ENCODE measurements at regions of chr5 and their contacts with region 1.

Region 1: DNA sequence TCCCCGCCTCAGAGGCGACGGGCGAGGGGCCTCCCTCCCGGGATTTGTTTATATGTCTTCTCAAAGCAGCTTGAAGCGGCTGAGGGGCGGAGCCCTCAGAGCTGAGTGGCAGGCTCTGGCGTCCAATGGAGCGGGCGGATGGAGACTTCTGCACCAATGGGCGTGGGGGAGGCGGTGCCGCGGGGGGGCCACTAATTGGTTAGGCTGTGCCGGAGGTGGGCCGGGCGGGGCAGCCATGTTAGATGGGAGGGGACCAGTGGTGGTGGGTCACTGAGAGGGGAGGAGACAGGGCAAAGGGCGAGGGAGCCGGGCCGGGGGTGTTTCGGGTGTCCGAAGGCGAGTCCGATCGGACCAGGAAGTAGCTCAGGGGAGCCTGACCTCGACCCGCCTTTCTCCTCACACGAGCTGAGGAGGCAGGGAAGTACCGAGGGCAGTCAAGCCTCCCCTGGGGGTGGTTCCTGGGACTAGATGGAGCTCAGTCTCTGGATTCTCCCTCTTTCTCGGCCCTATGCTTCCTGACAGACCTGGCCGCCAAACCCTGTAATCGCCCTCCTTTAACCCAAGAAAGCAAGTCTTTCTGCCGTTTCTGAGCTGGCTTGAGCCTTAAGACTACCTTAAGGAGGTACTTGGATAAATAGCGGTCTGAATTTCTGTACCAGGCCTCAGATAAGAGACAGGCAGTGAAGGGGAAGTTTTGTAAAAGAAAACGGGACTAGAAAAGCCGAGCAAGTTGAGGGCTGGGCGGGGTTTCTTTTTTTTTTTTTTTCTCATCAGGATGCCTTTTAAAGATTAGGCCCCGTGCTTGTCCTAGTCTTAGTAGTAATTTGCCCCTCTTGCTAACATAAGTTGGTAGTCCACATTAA is 1.1 kb downstream of the CREBRF start:
- DNase-seq: peak; percentile 98 to 99 (median 98)
- ATAC-seq: peak; percentile 81
- H3K4me3 ChIP-seq: peak overlapping the region; percentile 92 to 99
- H3K4me3 Mint-ChIP-seq: peak overlapping the region; percentile 94
- H3K27ac ChIP-seq: peak overlapping the region; percentile 80 to 81
- H3K27ac Mint-ChIP-seq: peak overlapping the region; percentile 94
- H3K4me1 ChIP-seq: peaks cover 36% of the 10 kb centered on the region
- H3K4me1 Mint-ChIP-seq: peaks cover 44% of the 10 kb centered on the region
- H3K27me3 ChIP-seq: no peaks in the 10 kb centered on the region
- H3K27me3 Mint-ChIP-seq: no peaks in the 10 kb centered on the region
- CTCF ChIP-seq: no peak

Region 2: DNA sequence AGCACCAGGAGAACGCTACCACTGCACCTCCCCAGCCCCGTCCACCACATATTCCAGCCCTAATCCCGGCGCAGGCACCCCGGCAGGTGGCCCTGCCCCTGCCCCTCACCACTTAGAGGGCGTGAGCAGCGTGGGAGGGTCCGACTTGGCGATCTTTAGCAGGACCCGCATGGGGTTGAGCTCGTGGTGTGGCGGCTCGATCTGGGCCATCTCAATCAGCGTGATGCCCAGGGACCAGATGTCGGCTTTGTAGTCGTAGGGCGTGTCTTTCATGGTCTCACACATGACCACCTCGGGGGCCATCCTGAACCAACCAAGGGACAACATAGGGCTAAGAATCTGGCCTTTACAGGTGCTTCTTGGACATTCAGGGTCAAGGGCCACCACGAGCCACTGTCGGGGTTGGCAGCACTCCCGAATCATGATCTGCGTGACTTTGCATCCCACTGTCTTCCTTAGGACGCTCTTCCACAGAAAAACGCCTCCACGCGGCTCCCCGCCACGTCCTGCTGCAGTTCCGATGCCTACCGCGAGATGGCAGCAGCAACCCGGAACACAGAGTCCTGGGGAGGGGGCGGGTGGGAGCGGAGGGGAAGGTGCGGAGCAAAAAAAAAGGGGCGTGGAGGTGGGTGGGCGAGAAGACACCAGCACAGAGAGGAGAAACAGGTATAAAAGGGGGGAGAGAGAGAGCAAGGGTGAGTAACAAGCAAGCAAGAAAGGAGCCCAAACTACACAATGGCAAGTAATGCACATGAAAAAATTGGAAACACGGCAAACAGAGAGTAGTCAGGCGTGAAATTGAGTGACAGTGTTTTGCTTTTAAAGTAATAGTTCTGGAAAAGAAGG is 950.6 kb before region 1 on chr5:
- CTCF ChIA-PET with region 1: no interaction called
- POLR2A ChIA-PET with region 1: no interaction called
- intact Hi-C with region 1: loop called in 1 of 2 experiments (anchors 10 kb)
- DNase-seq: peak; percentile 31 to 81 (median 69)
- ATAC-seq: peak; percentile 42
- H3K4me3 ChIP-seq: no peak overlapping the region
- H3K4me3 Mint-ChIP-seq: peak overlapping the region; percentile 8
- H3K27ac ChIP-seq: peak overlapping the region in 1 of 2 experiments; percentile 51
- H3K27ac Mint-ChIP-seq: peak overlapping the region; percentile 84
- H3K4me1 ChIP-seq: peaks cover 36% of the 10 kb centered on the region
- H3K4me1 Mint-ChIP-seq: peaks cover 48% of the 10 kb centered on the region
- H3K27me3 ChIP-seq: no peaks in the 10 kb centered on the region
- H3K27me3 Mint-ChIP-seq: no peaks in the 10 kb centered on the region
- CTCF ChIP-seq: peak; percentile 98

Region 3: DNA sequence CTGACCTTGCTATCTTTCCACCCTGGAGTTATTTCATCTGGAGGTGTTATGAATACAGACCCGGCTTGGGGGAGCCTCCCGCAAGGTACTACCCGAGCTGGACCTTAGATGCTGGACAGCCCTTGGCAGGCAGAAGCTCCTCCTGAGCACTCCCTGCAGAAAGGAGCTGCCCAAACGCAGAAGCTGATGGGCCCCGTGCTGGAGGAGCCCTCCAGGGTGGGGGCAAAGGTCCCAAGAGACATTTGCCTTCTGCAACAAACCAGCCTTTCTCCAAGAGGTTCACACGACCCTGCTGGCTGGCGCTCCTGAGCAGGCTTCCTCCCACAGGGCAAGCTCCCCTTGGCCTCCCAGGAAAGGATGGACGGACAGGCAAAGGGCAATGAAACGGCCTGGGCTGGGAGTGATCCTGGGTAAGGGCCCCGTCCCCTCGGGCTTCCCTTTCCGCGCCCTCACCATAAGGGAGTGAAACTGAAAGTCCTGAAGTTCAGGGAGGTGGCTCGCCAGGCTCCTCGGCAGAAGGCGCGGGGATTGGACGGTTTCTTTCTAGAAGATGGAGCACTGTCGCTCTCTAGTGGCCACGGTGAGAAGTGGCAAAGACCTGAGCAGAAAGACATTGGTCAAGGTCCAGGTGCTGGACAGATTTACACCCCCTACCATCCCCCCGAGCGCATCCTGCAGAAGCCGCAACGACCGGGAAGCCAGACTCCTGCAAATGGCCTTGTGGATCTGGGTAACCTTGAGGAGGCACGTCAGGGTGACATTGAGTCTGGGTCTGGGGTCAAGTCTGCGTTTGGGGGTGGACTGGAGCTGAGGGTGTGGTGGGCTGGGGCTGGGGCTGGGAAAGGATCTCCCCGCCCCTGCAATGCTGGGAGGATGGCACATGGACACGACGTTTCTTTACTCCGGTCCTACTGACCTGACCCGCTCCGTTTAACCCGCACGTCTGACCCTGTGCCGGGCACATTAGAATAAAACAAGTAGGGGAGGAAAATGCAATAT is 359.9 kb before region 1 on chr5:
- CTCF ChIA-PET with region 1: no interaction called
- POLR2A ChIA-PET with region 1: no interaction called
- intact Hi-C with region 1: loop called in 1 of 2 experiments (anchors 2 kb)
- DNase-seq: peak; percentile 67 to 92 (median 84)
- ATAC-seq: peak; percentile 98
- H3K4me3 ChIP-seq: peak overlapping the region; percentile 64 to 90
- H3K4me3 Mint-ChIP-seq: peak overlapping the region; percentile 93
- H3K27ac ChIP-seq: peak overlapping the region; percentile 43 to 81
- H3K27ac Mint-ChIP-seq: peak overlapping the region; percentile 92
- H3K4me1 ChIP-seq: peaks cover 10% of the 10 kb centered on the region
- H3K4me1 Mint-ChIP-seq: peaks cover 22% of the 10 kb centered on the region
- H3K27me3 ChIP-seq: peaks cover 0 to 3% of the 10 kb centered on the region in 2 experiments
- H3K27me3 Mint-ChIP-seq: peaks cover 16% of the 10 kb centered on the region
- CTCF ChIP-seq: peak; percentile 81

Region 4: GRCh38 chr5:172833686-172834414 is 223.4 kb before region 1 on chr5 and contains the start of gene ERGIC1:
- CTCF ChIA-PET with region 1: no interaction called
- POLR2A ChIA-PET with region 1: no interaction called
- intact Hi-C with region 1: loop called in 1 of 2 experiments (anchors 5 kb)
- DNase-seq: peak in 8 of 9 experiments; percentile 58 to 84 (median 72)
- ATAC-seq: peak; percentile 74
- H3K4me3 ChIP-seq: peak within 1 kb of the TSS; percentile 67 to 81
- H3K4me3 Mint-ChIP-seq: peak within 1 kb of the TSS; percentile 86
- H3K27ac ChIP-seq: peak within 1 kb of the TSS; percentile 67 to 88
- H3K27ac Mint-ChIP-seq: peak within 1 kb of the TSS; percentile 92
- H3K4me1 ChIP-seq: peaks cover 44% of the 10 kb centered on the region
- H3K4me1 Mint-ChIP-seq: peaks cover 44% of the 10 kb centered on the region
- H3K27me3 ChIP-seq: no peaks in the 10 kb centered on the region
- H3K27me3 Mint-ChIP-seq: no peaks in the 10 kb centered on the region
- CTCF ChIP-seq: no peak
- total RNA-seq, gene ERGIC1: 61.0 to 61.2 TPM

Region 5: GRCh38 chr5:172984243-172984953 is 72.9 kb before region 1 on chr5:
- CTCF ChIA-PET with region 1: interaction called, 7 read pairs
- POLR2A ChIA-PET with region 1: interaction called, 24 read pairs
- intact Hi-C with region 1: loop called (anchors 1 kb)
- DNase-seq: peak; percentile 52 to 90 (median 76)
- ATAC-seq: peak; percentile 84
- H3K4me3 ChIP-seq: peak overlapping the region; percentile 78 to 100
- H3K4me3 Mint-ChIP-seq: peak overlapping the region; percentile 97
- H3K27ac ChIP-seq: peak overlapping the region; percentile 74 to 99
- H3K27ac Mint-ChIP-seq: peak overlapping the region; percentile 98
- H3K4me1 ChIP-seq: peaks cover 18% of the 10 kb centered on the region
- H3K4me1 Mint-ChIP-seq: peaks cover 48% of the 10 kb centered on the region
- H3K27me3 ChIP-seq: no peaks in the 10 kb centered on the region
- H3K27me3 Mint-ChIP-seq: no peaks in the 10 kb centered on the region
- CTCF ChIP-seq: peak; percentile 52

Region 6: DNA sequence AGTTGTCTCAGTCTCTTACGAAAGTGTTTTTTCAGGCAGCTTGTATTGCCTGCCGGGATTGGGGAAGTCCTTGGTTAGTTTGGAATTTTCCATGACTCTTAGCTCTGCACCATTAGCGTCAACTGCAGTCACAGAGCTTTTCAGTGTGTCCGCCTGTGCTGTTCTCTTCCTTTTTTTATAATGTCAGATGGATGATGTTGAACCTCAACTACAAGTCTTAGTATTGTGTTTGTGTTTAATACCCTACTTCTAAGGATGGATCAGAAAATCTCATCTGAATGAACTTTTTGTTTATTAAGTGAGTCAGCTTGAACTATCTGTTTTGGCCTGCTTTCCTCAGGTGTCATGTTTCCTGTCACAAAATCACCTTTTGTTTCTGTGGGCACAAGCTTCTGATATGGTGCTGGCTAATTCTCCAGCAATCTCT is 40.7 kb before region 1 on chr5:
- CTCF ChIA-PET with region 1: no interaction called
- POLR2A ChIA-PET with region 1: no interaction called
- intact Hi-C with region 1: no loop called
- DNase-seq: peak in 1 of 9 experiments; percentile 4
- ATAC-seq: no peak
- H3K4me3 ChIP-seq: no peak overlapping the region
- H3K4me3 Mint-ChIP-seq: no peak overlapping the region
- H3K27ac ChIP-seq: no peak overlapping the region
- H3K27ac Mint-ChIP-seq: peak overlapping the region; percentile 76
- H3K4me1 ChIP-seq: peaks cover 5% of the 10 kb centered on the region
- H3K4me1 Mint-ChIP-seq: peaks cover 49% of the 10 kb centered on the region
- H3K27me3 ChIP-seq: no peaks in the 10 kb centered on the region
- H3K27me3 Mint-ChIP-seq: no peaks in the 10 kb centered on the region
- CTCF ChIP-seq: no peak

Region 7: GRCh38 chr5:173615884-173616576 is 558.7 kb after region 1 on chr5:
- CTCF ChIA-PET with region 1: no interaction called
- POLR2A ChIA-PET with region 1: no interaction called
- intact Hi-C with region 1: loop called (anchors 1 to 2 kb)
- DNase-seq: peak; percentile 41 to 88 (median 70)
- ATAC-seq: peak; percentile 60
- H3K4me3 ChIP-seq: peak overlapping the region; percentile 81 to 89
- H3K4me3 Mint-ChIP-seq: peak overlapping the region; percentile 95
- H3K27ac ChIP-seq: peak overlapping the region; percentile 85 to 91
- H3K27ac Mint-ChIP-seq: peak overlapping the region; percentile 97
- H3K4me1 ChIP-seq: peaks cover 34% of the 10 kb centered on the region
- H3K4me1 Mint-ChIP-seq: peaks cover 52% of the 10 kb centered on the region
- H3K27me3 ChIP-seq: no peaks in the 10 kb centered on the region
- H3K27me3 Mint-ChIP-seq: no peaks in the 10 kb centered on the region
- CTCF ChIP-seq: peak; percentile 73